OCI-LY7 (cell line): ENCODE measurements at regions of chr4 and their contacts with region 1.

Region 1: GRCh38 chr4:77833126-77833724 is 14.1 kb upstream of the CNOT6L start:
- DNase-seq: no peak
- H3K4me3 ChIP-seq: no peak overlapping the region
- H3K27ac ChIP-seq: no peak overlapping the region
- H3K4me1 ChIP-seq: peaks cover 35% of the 10 kb centered on the region
- CTCF ChIP-seq: no peak

Region 2: DNA sequence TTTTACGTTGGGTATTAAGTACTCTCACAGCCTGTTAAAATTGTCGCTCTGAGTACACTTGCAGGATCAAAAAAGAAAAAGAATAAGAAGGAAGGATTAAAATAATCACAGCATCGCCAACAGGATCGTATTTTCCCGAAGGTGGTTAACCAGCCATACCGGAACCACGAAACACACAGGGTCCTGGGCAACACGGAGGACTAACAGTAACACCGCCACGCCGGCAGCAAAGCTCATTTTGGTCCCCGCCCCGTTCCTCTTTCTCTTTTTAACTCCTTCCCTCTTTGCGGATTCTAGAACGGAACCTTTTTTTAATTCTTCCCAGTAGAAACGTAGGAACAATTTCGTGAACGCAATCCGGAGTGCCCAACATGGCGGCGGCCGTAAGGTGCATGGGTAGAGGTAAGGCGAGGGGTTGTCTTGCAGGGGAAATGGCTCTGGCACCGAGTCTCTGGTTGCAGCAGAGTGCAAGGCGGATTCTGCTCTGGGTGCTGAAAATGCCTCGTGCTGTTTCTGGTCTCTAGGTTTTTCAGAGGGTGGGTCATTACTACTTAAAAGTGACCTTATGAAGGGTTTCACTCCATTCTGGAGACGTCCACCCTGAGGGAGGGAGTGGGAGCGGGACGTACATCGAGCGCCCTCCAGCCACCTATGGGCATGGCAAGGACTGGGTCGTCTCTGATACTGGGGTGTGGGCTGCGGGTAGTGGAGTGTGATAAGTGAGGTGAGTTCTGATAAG is 29.4 kb after region 1 on chr4 and contains the start of gene MRPL1:
- CTCF ChIA-PET with region 1: no interaction called
- POLR2A ChIA-PET with region 1: interaction called, 14 read pairs
- intact Hi-C with region 1: no loop called
- DNase-seq: peak; percentile 96
- H3K4me3 ChIP-seq: peak within 1 kb of the TSS; percentile 73
- H3K27ac ChIP-seq: peak within 1 kb of the TSS; percentile 94
- H3K4me1 ChIP-seq: peaks cover 27% of the 10 kb centered on the region
- CTCF ChIP-seq: peak; percentile 62
- total RNA-seq, gene MRPL1: 16.6 and 22.6 TPM in 2 replicates